ENCODE measurements at regions of chr13 and their contacts with region 1.

Region 1: GRCh38 chr13:40069173-40070044 is 413.9 kb downstream of the COG6 start:
- DNase-seq: peak; percentile 86
- ATAC-seq: peak; percentile 93
- H3K4me3 Mint-ChIP-seq: peak overlapping the region; percentile 26
- H3K27ac Mint-ChIP-seq: peak overlapping the region; percentile 80
- H3K4me1 Mint-ChIP-seq: peaks cover 31% of the 10 kb centered on the region
- H3K27me3 Mint-ChIP-seq: no peaks in the 10 kb centered on the region

Region 2: GRCh38 chr13:39159393-39159792 is 910.0 kb before region 1 on chr13:
- CTCF ChIA-PET with region 1: no interaction called
- POLR2A ChIA-PET with region 1: no interaction called
- intact Hi-C with region 1: no loop called
- DNase-seq: peak; percentile 28
- ATAC-seq: peak; percentile 74
- H3K4me3 Mint-ChIP-seq: no peak overlapping the region
- H3K27ac Mint-ChIP-seq: no peak overlapping the region
- H3K4me1 Mint-ChIP-seq: peaks cover 11% of the 10 kb centered on the region
- H3K27me3 Mint-ChIP-seq: peaks cover 25% of the 10 kb centered on the region

Region 3: DNA sequence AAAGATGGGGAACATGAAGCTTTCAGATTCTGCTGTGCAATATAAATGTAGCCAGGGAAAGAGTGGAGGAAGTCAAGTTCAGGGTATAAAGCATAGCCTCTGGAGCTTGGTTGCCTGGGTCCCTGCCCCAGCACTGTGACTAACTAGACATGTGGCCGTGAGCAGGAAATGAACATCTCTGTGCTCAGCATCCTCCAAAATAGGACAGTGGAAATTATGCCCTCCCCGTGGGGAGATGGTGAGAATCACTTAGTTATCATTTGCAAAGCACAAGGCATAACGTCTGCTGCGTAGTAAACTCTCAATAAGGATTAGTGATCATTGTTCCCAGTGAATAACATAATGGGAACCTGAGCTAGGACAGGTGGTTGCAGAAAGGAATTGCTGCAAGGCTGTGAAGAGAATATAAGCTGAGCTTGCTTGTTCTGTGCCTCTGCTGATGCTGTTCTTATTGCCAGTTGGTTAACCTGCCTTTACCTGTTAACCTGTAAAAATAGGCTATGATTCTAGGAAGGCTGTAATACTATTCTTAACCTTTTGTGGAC is 27.0 kb after region 1 on chr13:
- CTCF ChIA-PET with region 1: interaction called, 12 read pairs
- POLR2A ChIA-PET with region 1: no interaction called
- intact Hi-C with region 1: loop called (anchors 1 to 5 kb)
- DNase-seq: peak; percentile 72
- ATAC-seq: peak; percentile 98
- H3K4me3 Mint-ChIP-seq: no peak overlapping the region
- H3K27ac Mint-ChIP-seq: peak overlapping the region; percentile 24
- H3K4me1 Mint-ChIP-seq: peaks cover 27% of the 10 kb centered on the region
- H3K27me3 Mint-ChIP-seq: no peaks in the 10 kb centered on the region

Region 4: DNA sequence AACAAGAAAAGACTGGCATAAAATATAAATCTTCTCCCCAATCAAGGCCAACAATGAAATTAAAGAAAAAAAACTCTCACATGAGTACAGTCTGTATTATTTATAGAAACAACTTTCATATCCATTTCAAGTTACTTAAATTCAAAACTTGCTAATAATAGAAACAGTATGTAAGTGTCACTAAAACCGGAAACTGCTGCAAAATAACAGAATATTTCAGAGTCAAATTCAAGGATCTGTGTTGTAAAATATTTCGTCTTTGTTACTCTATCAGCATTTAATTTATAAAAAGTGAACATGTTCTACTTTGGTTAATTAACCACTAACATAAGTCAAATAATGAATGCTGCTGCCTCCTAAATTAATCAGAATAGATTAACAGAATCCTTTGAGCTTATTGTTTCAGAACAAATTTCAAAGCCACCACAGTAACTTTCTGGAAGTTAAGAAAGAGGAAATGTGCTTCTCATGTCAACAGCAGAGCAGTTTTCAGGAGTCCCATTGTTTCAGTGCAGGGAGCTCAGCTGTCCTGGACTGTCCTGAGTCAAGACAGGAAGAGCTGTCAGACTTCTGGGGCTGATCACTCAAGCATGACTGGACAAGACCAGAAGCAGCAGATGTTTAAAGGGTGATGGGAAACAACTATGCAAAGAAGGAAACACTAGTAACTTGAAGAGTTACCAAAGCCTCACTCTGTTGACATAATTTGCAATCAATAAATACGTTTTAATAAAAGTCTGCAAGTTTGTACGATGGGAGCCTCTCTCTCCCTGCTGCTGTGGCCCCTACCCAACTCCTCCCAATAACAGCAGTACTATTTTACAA is 520.1 kb after region 1 on chr13:
- CTCF ChIA-PET with region 1: no interaction called
- POLR2A ChIA-PET with region 1: no interaction called
- intact Hi-C with region 1: loop called in 1 of 2 experiments (anchors 10 kb)
- DNase-seq: no peak
- ATAC-seq: peak; percentile 72
- H3K4me3 Mint-ChIP-seq: no peak overlapping the region
- H3K27ac Mint-ChIP-seq: peak overlapping the region; percentile 86
- H3K4me1 Mint-ChIP-seq: peaks cover 93% of the 10 kb centered on the region
- H3K27me3 Mint-ChIP-seq: no peaks in the 10 kb centered on the region

Measured in activated CD4-positive, alpha-beta T cell treated with anti-CD3 and anti-CD28 coated beads for 36 hours (primary cell).